ENCODE measurements at regions of chr10 and their contacts with region 1.

Region 1: GRCh38 chr10:55653531-55653930 is 707.5 kb downstream of the ZWINT start:
- DNase-seq: no peak
- ATAC-seq: no peak
- H3K4me3 ChIP-seq: no peak overlapping the region
- H3K27ac ChIP-seq: no peak overlapping the region
- H3K4me1 ChIP-seq: no peaks in the 10 kb centered on the region
- H3K27me3 ChIP-seq: no peaks in the 10 kb centered on the region
- CTCF ChIP-seq: no peak

Region 2: DNA sequence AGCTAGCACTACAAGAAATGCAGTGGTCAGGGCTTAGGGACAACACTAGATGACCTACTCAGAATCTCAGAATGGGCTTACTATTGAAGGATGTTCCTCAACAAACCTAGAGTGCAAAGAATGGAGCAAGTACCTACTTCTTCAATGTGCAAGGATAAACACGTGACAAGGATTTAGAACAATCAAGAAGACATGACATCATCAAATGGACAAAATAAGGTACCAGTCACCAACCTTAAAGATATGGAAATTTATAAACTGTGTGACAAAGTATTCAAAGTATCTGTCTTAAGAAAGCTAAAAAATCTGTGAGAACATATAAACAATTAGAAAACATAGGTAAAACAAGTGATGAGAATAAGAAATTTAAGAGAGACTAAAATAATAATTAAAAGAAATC is 51.4 kb after region 1 on chr10:
- CTCF ChIA-PET with region 1: no interaction called
- POLR2A ChIA-PET with region 1: no interaction called
- intact Hi-C with region 1: loop called (anchors 5 kb)
- DNase-seq: no peak
- ATAC-seq: no peak
- H3K4me3 ChIP-seq: no peak overlapping the region
- H3K27ac ChIP-seq: no peak overlapping the region
- H3K4me1 ChIP-seq: no peaks in the 10 kb centered on the region
- H3K27me3 ChIP-seq: no peaks in the 10 kb centered on the region
- CTCF ChIP-seq: no peak

Measured in PC-3 (cell line).